SK-N-SH (cell line): ENCODE measurements at regions of chr11 and their contacts with region 1.

Region 1: GRCh38 chr11:84398017-84398626 is 1112.0 kb upstream of the CCDC90B start:
- DNase-seq: peak; percentile 28
- H3K4me3 ChIP-seq: no peak overlapping the region
- H3K27ac ChIP-seq: no peak overlapping the region
- H3K4me1 ChIP-seq: no peaks in the 10 kb centered on the region
- H3K27me3 ChIP-seq: no peaks in the 10 kb centered on the region
- CTCF ChIP-seq: peak; percentile 70
- EP300 ChIP-seq: no peak
- RAD21 ChIP-seq: peak; percentile 80

Region 2: DNA sequence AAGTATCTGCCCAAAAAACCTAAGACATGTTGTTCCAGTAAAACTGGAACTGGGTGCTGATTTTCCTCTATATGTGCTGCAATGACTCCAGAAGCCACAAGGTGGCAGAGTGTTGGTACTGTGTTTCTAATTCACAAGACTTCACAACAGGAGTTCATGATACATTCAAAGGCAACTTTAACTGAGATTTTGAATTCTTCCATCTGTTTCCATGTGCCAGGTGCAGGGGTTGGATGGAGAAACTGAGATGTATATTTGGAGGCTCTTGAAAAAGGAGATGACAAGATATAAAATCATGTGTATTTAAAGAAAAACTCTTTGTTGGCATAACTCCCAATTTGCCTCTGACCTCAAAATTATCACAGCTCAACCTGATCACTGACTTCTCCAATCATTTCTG is 13.4 kb before region 1 on chr11:
- CTCF ChIA-PET with region 1: interaction called, 53 read pairs
- POLR2A ChIA-PET with region 1: no interaction called
- DNase-seq: peak; percentile 25
- H3K4me3 ChIP-seq: no peak overlapping the region; a peak in 1 of 4 replicates
- H3K27ac ChIP-seq: no peak overlapping the region
- H3K4me1 ChIP-seq: peaks cover 0 to 3% of the 10 kb centered on the region in 2 experiments; a peak in 2 of 4 replicates
- H3K27me3 ChIP-seq: no peaks in the 10 kb centered on the region
- CTCF ChIP-seq: peak; percentile 85
- EP300 ChIP-seq: no peak
- RAD21 ChIP-seq: peak; percentile 70

Region 3: GRCh38 chr11:84518631-84519183 is 120.6 kb after region 1 on chr11:
- CTCF ChIA-PET with region 1: interaction called, 78 read pairs
- POLR2A ChIA-PET with region 1: no interaction called
- DNase-seq: peak; percentile 44
- H3K4me3 ChIP-seq: no peak overlapping the region
- H3K27ac ChIP-seq: peak overlapping the region in 1 of 2 experiments; percentile 82; a peak in 2 of 4 replicates
- H3K4me1 ChIP-seq: peaks cover 0 to 15% of the 10 kb centered on the region in 2 experiments; a peak in 3 of 4 replicates
- H3K27me3 ChIP-seq: no peaks in the 10 kb centered on the region
- CTCF ChIP-seq: no peak
- EP300 ChIP-seq: peak; percentile 20 to 98; a peak in 3 of 4 replicates
- RAD21 ChIP-seq: no peak

Region 4: GRCh38 chr11:84558085-84558905 is 160.2 kb after region 1 on chr11:
- CTCF ChIA-PET with region 1: interaction called, 37 read pairs
- POLR2A ChIA-PET with region 1: no interaction called
- DNase-seq: peak; percentile 27
- H3K4me3 ChIP-seq: no peak overlapping the region; a peak in 1 of 4 replicates
- H3K27ac ChIP-seq: no peak overlapping the region
- H3K4me1 ChIP-seq: no peaks in the 10 kb centered on the region
- H3K27me3 ChIP-seq: no peaks in the 10 kb centered on the region
- CTCF ChIP-seq: peak; percentile 87
- EP300 ChIP-seq: no peak
- RAD21 ChIP-seq: peak; percentile 82